ENCODE measurements at regions of chr9 and their contacts with region 1.

Region 1: DNA sequence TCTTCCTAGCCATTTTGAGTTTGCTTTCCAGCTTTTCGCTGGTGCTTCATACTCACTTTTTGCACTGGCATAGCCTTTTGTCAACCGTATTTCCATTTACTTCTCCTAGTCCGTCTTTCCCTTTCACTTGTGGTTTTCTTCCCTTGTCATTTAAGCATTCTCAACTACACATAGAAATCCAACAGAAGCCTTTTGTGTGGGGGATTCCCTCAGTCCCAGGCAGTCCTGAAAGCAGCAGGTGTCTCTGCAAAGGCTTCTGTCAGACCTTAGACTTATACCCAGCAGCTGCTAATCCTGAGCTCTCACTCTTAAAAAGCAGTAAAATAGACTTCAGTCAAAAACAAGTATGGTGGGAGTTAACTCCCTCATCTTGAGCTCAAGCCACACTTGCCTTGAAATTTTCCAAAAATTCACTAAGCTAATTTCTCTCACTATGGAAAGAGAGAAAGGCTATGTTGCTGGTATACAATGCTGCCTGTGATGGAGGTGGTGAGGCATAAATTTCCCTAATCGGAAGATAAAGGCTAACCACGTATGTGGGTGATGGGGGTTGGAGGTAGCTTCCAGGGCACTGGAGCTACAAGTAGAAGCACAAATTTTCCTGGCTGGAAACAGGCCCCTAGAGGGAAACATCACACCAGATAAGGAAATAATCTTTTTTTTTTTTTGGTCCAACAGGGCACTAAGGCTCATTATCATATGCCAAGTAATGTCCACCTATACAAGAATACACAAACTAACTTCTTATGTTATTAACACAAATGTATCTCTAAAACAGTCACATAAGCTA is 34.8 kb upstream of the IFNK start:
- DNase-seq: no peak
- ATAC-seq: no peak
- H3K4me3 ChIP-seq: no peak overlapping the region
- H3K27ac ChIP-seq: no peak overlapping the region
- H3K4me1 ChIP-seq: no peaks in the 10 kb centered on the region
- H3K27me3 ChIP-seq: no peaks in the 10 kb centered on the region
- CTCF ChIP-seq: no peak

Region 2: DNA sequence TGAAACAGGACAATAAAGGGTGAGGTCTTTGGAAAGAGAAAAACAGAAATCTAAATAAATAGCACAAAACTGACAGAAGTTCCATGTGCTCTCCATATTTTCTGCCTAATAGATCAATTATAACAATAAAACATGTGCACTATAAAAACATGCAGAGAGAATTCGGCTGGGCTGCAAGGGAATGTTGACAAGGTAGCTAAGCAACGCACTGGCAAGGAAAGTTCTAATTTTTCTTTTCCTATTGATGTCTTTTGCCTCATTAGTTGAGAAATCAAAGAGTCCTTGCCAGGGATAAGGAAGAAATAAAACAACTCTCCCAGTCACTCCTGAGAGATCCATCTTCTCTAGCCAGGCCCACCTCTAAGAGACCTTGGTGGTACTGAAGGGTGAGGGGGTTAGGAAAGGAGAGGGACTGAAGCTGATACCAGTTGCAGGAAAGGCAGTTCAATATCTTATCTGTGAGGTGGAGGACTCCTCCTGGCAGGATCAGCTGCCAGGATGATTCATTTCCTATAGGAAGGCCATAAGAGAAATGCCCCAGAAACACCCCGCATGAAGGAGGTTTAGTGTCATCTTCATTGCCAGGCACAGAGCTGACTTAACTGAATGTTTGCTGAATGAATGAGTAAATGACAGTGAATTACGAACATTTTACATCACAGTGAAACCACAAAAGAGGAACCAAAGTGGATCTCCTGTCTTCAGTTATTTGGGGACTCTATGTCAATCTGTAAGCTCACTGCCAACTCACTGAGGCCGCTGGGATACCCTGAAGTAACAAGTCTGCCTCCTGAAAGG is 28.9 kb before region 1 on chr9:
- intact Hi-C with region 1: loop called in 1 of 2 experiments (anchors 2 kb)
- DNase-seq: no peak
- ATAC-seq: peak in 2 of 4 donors; percentile 17 to 19
- H3K4me3 ChIP-seq: no peak overlapping the region
- H3K27ac ChIP-seq: no peak overlapping the region
- H3K4me1 ChIP-seq: peaks cover 18% of the 10 kb centered on the region
- H3K27me3 ChIP-seq: no peaks in the 10 kb centered on the region
- CTCF ChIP-seq: no peak

Region 3: DNA sequence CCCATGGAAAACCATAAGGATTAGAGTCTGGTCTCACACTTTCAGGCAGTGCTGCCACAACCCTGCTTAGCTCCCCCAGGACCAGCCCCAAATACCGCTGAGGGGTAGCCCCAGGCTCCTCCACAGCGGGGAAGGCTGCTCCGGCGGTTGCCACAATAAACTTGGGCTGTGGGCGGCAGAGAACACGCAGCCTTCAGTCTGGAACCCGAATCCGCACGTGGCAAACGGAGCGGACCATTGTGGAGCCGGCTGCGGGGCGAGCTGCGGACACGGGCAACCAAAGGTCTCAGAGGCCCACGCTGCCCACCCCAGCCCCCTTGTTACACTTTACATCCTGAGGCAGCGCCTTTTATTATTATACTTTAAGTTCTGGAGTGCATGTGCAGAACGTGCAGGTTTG is 121.3 kb after region 1 on chr9:
- intact Hi-C with region 1: no loop called
- DNase-seq: peak in 1 of 2 donors; percentile 26
- ATAC-seq: no peak
- H3K4me3 ChIP-seq: no peak overlapping the region
- H3K27ac ChIP-seq: no peak overlapping the region
- H3K4me1 ChIP-seq: no peaks in the 10 kb centered on the region
- H3K27me3 ChIP-seq: peaks cover 0 to 3% (median 0%) of the 10 kb centered on the region in 3 donors
- CTCF ChIP-seq: no peak

Measured in psoas muscle (tissue), 8 donors.